Caco-2 (cell line): ENCODE measurements at regions of chr2 and their contacts with region 1.

Region 1: GRCh38 chr2:153761936-153762335 is 109.8 kb upstream of the GALNT13 start:
- DNase-seq: no peak
- H3K4me3 ChIP-seq: no peak overlapping the region
- H3K4me3 Mint-ChIP-seq: no peak overlapping the region
- H3K27ac Mint-ChIP-seq: no peak overlapping the region
- H3K4me1 ChIP-seq: no peaks in the 10 kb centered on the region
- H3K4me1 Mint-ChIP-seq: no peaks in the 10 kb centered on the region
- H3K27me3 ChIP-seq: no peaks in the 10 kb centered on the region
- H3K27me3 Mint-ChIP-seq: no peaks in the 10 kb centered on the region
- CTCF ChIP-seq: no peak

Region 2: GRCh38 chr2:153739394-153739793 is 22.5 kb before region 1 on chr2:
- CTCF ChIA-PET with region 1: no interaction called
- POLR2A ChIA-PET with region 1: no interaction called
- intact Hi-C with region 1: loop called (anchors 1 kb)
- DNase-seq: no peak
- H3K4me3 ChIP-seq: no peak overlapping the region
- H3K4me3 Mint-ChIP-seq: no peak overlapping the region
- H3K27ac Mint-ChIP-seq: no peak overlapping the region
- H3K4me1 ChIP-seq: no peaks in the 10 kb centered on the region
- H3K4me1 Mint-ChIP-seq: no peaks in the 10 kb centered on the region
- H3K27me3 ChIP-seq: no peaks in the 10 kb centered on the region
- H3K27me3 Mint-ChIP-seq: no peaks in the 10 kb centered on the region
- CTCF ChIP-seq: no peak